Gastrocnemius medialis (tissue), 4 donors: ENCODE measurements at regions of chr1 and their contacts with region 1.

Region 1: DNA sequence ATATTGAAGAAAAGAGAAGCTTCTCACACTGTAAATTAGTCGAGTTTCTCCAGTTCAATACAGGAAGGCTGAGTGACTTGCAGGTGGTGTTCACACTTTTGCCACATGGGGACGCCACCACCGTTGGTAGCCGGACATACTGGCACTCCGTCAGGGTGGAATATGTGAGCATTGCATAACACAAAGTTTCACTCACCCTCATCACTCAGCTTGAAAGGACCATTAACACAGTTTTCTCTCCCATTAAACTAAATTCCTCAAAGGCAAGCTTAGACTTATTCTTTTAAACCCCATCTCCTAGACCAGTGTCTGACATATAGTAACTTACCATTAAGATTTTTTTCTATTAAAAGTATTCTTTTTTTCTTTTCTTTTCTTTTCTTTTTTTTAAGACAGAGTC is 105.3 kb upstream of the SERBP1 start:
- DNase-seq: peak; percentile 59 to 74
- ATAC-seq: peak; percentile 82 to 92
- H3K4me3 ChIP-seq: no peak overlapping the region
- H3K27ac ChIP-seq: no peak overlapping the region
- H3K4me1 ChIP-seq: peaks cover 6% of the 10 kb centered on the region in 2 donors
- H3K27me3 ChIP-seq: no peaks in the 10 kb centered on the region
- CTCF ChIP-seq: peak; percentile 91 to 97 (median 92)
- POLR2A ChIP-seq: no peak

Region 2: DNA sequence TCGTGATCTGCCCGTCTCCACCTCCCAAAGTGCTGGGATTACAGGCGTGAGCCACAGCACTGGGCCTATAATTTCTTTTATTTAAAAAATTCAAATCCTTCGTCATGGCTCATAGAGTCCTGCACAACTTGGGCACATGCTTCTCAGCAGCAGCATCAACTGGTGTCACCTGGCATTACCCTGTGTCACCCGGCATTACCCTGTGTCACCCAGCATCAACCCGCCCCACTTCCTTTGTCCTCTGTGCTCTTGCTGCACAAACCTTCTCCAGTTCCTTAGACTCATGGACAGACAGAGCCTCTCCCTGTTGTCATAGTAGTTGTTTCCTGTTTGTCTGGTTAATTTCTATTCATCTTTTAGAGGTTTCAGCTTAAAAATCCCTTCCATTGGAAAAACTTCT is 15.9 kb after region 1 on chr1:
- in situ Hi-C with region 1: no loop called
- intact Hi-C with region 1: no loop called
- DNase-seq: no peak
- ATAC-seq: no peak
- H3K4me3 ChIP-seq: no peak overlapping the region
- H3K27ac ChIP-seq: no peak overlapping the region
- H3K4me1 ChIP-seq: peaks cover 0 to 6% of the 10 kb centered on the region in 2 donors
- H3K27me3 ChIP-seq: no peaks in the 10 kb centered on the region
- CTCF ChIP-seq: no peak
- POLR2A ChIP-seq: no peak

Region 3: GRCh38 chr1:67561704-67562113 is 26.2 kb after region 1 on chr1:
- in situ Hi-C with region 1: no loop called
- intact Hi-C with region 1: loop called (anchors 2 kb)
- DNase-seq: peak; percentile 94 to 99
- ATAC-seq: peak; percentile 90 to 91
- H3K4me3 ChIP-seq: peak overlapping the region in 2 of 4 donors; percentile 0 to 19
- H3K27ac ChIP-seq: peak overlapping the region; percentile 88 to 94 (median 90)
- H3K4me1 ChIP-seq: peaks cover 27 to 48% of the 10 kb centered on the region in 2 donors
- H3K27me3 ChIP-seq: no peaks in the 10 kb centered on the region
- CTCF ChIP-seq: peak; percentile 90 to 95 (median 95)
- POLR2A ChIP-seq: peak in 1 of 2 donors; percentile 38

Region 4: DNA sequence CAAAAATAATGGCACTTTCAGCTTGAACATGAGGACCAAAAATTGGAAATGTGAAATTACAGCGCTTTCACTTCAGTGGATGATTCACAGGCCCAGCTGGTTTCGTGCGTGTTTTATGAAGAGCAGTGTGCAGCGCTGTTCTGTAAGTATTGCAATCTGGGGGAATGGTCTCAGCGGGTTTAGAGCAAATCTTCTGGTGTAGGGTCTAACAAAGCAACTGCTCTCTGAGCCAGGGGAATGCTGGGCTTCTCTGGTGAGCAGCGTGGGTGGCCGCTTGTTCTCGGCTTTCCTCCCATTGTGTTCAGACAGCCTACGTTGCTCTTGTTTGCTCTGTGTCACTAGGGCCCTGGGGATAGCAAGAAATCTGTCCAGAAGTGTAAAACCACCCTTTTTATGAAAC is 107.2 kb after region 1 on chr1:
- in situ Hi-C with region 1: no loop called
- intact Hi-C with region 1: no loop called
- DNase-seq: peak in 1 of 2 donors; percentile 13
- ATAC-seq: peak in 1 of 2 donors; percentile 35
- H3K4me3 ChIP-seq: no peak overlapping the region
- H3K27ac ChIP-seq: peak overlapping the region in 2 of 4 donors; percentile 10 to 11
- H3K4me1 ChIP-seq: peaks cover 20 to 25% of the 10 kb centered on the region in 2 donors
- H3K27me3 ChIP-seq: no peaks in the 10 kb centered on the region
- CTCF ChIP-seq: no peak
- POLR2A ChIP-seq: no peak

Region 5: DNA sequence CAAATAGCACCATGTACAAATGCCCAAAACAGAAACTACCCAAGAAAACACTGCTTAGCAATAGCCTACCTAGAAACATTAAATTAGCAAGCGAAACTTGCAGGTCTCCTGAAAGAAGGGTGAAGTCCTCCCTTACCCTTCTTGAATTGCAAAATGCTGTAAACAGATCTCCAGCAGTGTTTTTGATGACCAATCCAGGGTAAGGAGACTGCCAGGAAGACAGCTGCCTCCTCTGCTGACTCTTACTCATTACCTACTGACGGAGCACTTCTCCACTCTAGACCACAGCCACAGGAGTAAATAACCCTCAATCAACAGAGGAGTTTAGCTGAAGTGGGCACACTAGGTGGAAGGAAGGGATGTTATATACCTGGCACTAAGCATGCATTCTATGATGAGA is 117.3 kb after region 1 on chr1:
- in situ Hi-C with region 1: no loop called
- intact Hi-C with region 1: no loop called
- DNase-seq: peak; percentile 86 to 88
- ATAC-seq: peak; percentile 100
- H3K4me3 ChIP-seq: peak overlapping the region in 1 of 4 donors; percentile 26
- H3K27ac ChIP-seq: peak overlapping the region; percentile 79 to 87 (median 82)
- H3K4me1 ChIP-seq: peaks cover 13 to 17% of the 10 kb centered on the region in 2 donors
- H3K27me3 ChIP-seq: no peaks in the 10 kb centered on the region
- CTCF ChIP-seq: peak in 1 of 5 experiments; percentile 17
- POLR2A ChIP-seq: peak; percentile 61 to 83

Region 6: GRCh38 chr1:68301471-68302001 is 766.1 kb after region 1 on chr1:
- in situ Hi-C with region 1: no loop called
- intact Hi-C with region 1: no loop called
- DNase-seq: no peak
- ATAC-seq: no peak
- H3K4me3 ChIP-seq: no peak overlapping the region
- H3K27ac ChIP-seq: no peak overlapping the region
- H3K4me1 ChIP-seq: no peaks in the 10 kb centered on the region
- H3K27me3 ChIP-seq: no peaks in the 10 kb centered on the region
- CTCF ChIP-seq: no peak
- POLR2A ChIP-seq: no peak

Region 7: DNA sequence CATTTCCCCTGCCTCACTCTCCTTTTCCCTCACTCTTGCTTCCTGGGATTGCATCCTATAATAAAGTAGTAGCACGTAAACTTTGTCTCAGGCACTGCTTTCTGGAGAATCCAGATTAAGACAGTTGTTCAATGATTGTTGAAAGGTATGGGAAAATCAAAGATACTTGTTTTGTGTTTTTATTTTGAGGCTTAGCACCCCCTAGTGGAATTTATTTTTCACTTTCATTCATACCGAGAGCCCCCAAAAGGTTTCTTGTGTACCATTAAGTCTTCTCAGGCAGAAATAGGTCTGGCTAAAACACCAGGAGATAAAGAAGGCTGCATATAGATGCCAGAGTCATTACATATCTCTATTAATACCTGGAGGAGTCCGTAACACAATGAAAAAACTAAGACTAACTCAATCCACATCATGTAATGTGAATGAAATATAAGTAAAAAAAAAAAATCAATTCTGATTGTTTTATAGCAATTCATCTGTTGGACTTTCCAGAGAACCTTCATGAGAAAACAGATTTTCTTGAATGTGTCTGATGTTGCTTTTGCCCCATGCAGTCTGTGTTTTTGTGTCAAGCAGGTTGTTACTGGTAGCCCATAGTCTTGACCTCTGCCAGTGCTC is 810.8 kb after region 1 on chr1:
- in situ Hi-C with region 1: loop called in 1 of 4 experiments (anchors 25 kb)
- intact Hi-C with region 1: no loop called
- DNase-seq: no peak
- ATAC-seq: no peak
- H3K4me3 ChIP-seq: no peak overlapping the region
- H3K27ac ChIP-seq: no peak overlapping the region
- H3K4me1 ChIP-seq: no peaks in the 10 kb centered on the region
- H3K27me3 ChIP-seq: no peaks in the 10 kb centered on the region
- CTCF ChIP-seq: peak; percentile 11 to 62 (median 33)
- POLR2A ChIP-seq: no peak